ENCODE measurements at regions of chr21 and their contacts with region 1.

Region 1: DNA sequence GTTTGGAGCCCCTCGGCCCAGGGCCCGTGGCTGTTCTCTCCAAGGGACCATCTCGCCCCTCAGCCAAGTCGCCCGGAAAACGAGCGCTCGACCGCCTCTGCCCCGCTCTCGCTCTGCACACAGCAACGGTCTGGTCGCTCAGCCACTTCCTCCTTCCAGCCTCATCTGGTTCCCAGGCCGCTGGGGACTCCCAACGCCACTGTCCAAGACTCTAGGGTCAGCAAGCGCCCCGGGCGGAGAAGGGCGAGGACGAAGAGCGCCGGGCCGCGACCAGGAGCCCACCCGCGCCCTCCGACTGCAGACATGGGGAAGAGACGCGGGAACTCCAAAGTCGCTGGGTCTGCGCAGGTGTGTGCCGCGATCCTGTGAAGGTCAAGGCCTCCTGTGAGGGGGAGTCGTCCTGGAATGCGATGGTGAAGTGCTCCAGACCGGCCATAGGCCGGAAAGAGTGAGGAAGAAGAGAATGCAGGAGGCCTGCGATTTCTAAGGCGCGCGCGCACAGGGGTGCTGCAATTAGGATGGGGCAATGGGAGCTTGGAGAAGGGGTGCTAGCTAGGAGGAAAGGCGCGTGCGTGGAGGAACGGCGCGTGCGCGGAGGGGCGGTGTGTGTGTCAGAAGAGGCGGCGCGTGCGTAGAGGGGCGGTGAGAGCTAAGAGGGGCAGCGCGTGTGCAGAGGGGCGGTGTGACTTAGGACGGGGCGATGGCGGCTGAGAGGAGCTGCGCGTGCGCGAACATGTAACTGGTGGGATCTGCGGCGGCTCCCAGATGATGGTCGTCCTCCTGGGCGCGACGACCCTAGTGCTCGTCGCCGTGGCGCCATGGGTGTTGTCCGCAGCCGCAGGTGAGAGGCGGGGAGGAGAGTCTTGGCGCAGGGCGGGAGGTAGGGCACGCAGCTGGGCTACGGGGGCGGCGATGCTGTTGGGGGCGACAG is at the start of gene IFNAR1:
- DNase-seq: peak; percentile 99
- H3K4me3 Mint-ChIP-seq: no peak within 1 kb of the TSS
- H3K27ac Mint-ChIP-seq: no peak within 1 kb of the TSS
- H3K4me1 Mint-ChIP-seq: peaks cover 19% of the 10 kb centered on the region
- H3K27me3 Mint-ChIP-seq: peaks cover 4% of the 10 kb centered on the region
- total RNA-seq, gene IFNAR1: 19.0 and 24.0 TPM in 2 replicates

Region 2: GRCh38 chr21:33229784-33230544 is 94.6 kb before region 1 on chr21 and contains the start of gene IFNAR2:
- intact Hi-C with region 1: loop called (anchors 1 kb)
- DNase-seq: peak; percentile 93
- H3K4me3 Mint-ChIP-seq: peak within 1 kb of the TSS; percentile 84
- H3K27ac Mint-ChIP-seq: peak within 1 kb of the TSS; percentile 89
- H3K4me1 Mint-ChIP-seq: peaks cover 43% of the 10 kb centered on the region
- H3K27me3 Mint-ChIP-seq: peaks cover 2% of the 10 kb centered on the region
- total RNA-seq, gene IFNAR2: 35.2 and 36.7 TPM in 2 replicates

Region 3: GRCh38 chr21:33238565-33239255 is 85.8 kb before region 1 on chr21:
- intact Hi-C with region 1: loop called (anchors 2 kb)
- DNase-seq: no peak
- H3K4me3 Mint-ChIP-seq: peak overlapping the region; percentile 65
- H3K27ac Mint-ChIP-seq: peak overlapping the region; percentile 87
- H3K4me1 Mint-ChIP-seq: peaks cover 56% of the 10 kb centered on the region
- H3K27me3 Mint-ChIP-seq: no peaks in the 10 kb centered on the region

Region 4: GRCh38 chr21:33266050-33266788 is 58.3 kb before region 1 on chr21 and contains the start of gene IL10RB:
- intact Hi-C with region 1: loop called (anchors 2 kb)
- DNase-seq: peak; percentile 93
- H3K4me3 Mint-ChIP-seq: peak within 1 kb of the TSS; percentile 99
- H3K27ac Mint-ChIP-seq: peak within 1 kb of the TSS; percentile 93
- H3K4me1 Mint-ChIP-seq: peaks cover 37% of the 10 kb centered on the region
- H3K27me3 Mint-ChIP-seq: no peaks in the 10 kb centered on the region
- total RNA-seq, gene IL10RB: 21.1 and 24.0 TPM in 2 replicates

Region 5: GRCh38 chr21:33360881-33361602 is 36.5 kb after region 1 on chr21:
- intact Hi-C with region 1: loop called (anchors 5 kb)
- DNase-seq: peak; percentile 94
- H3K4me3 Mint-ChIP-seq: peak overlapping the region; percentile 73
- H3K27ac Mint-ChIP-seq: peak overlapping the region; percentile 10
- H3K4me1 Mint-ChIP-seq: peaks cover 17% of the 10 kb centered on the region
- H3K27me3 Mint-ChIP-seq: no peaks in the 10 kb centered on the region

Region 6: GRCh38 chr21:33434770-33435360 is 110.3 kb after region 1 on chr21:
- intact Hi-C with region 1: loop called (anchors 2 kb)
- DNase-seq: peak; percentile 81
- H3K4me3 Mint-ChIP-seq: peak overlapping the region; percentile 71
- H3K27ac Mint-ChIP-seq: peak overlapping the region; percentile 86
- H3K4me1 Mint-ChIP-seq: peaks cover 24% of the 10 kb centered on the region
- H3K27me3 Mint-ChIP-seq: no peaks in the 10 kb centered on the region